IMR-90 (cell line): ENCODE measurements at regions of chr6 and their contacts with region 1.

Region 1: DNA sequence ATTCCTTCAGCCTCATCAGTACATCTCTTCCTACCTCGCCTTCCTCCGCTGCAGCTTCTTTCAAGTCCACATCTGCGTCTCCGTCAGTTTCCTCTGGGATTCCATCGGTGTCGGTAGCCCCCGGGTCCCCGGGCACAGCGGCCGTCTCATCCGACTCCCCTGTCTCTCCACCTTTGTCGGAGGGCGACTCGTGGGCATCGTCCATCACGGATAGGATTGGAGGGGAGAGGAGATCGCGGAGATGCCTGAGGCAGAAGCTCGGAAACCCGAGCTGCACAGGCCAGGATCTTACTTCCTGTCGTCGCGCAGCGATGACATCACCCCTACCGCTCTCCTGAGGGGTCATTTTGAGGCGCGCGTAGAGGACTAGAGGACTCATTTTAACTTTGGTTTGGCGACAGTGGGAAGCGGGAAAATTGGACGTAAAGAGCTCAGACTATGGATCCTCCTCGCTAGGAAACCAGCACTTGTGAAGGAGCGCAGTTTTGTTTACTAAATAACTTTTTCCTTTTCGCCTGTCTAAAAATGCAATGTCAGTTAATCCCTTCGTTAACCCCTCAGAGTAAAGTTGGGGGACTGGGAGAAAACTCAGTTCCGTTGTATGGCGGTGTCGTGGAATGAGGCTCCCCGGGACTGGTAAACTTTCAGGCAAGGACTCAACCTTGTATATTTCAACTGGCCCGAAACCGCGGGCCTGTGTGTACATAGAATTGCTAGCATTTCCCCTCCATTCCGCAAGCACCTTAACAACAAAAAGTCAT is at the start of gene TAF11:
- DNase-seq: peak; percentile 96
- ATAC-seq: peak; percentile 92
- H3K4me3 ChIP-seq: peak within 1 kb of the TSS; percentile 80
- H3K27ac ChIP-seq: peak within 1 kb of the TSS; percentile 85
- H3K4me1 ChIP-seq: no peaks in the 10 kb centered on the region
- H3K27me3 ChIP-seq: no peaks in the 10 kb centered on the region
- CTCF ChIP-seq: no peak
- POLR2A ChIP-seq: peak; percentile 88
- RAD21 ChIP-seq: peak; percentile 4; the same call in 1 of the 2 replicates
- total RNA-seq, gene TAF11: 12.7 and 24.2 TPM in 2 replicates

Region 2: GRCh38 chr6:34810936-34811632 is 76.8 kb before region 1 on chr6:
- CTCF ChIA-PET with region 1: no interaction called
- POLR2A ChIA-PET with region 1: no interaction called
- dilution Hi-C with region 1: no loop called
- in situ Hi-C with region 1: no loop called
- intact Hi-C with region 1: no loop called
- DNase-seq: peak; percentile 38
- ATAC-seq: peak; percentile 71
- H3K4me3 ChIP-seq: no peak overlapping the region
- H3K27ac ChIP-seq: no peak overlapping the region
- H3K4me1 ChIP-seq: peaks cover 5% of the 10 kb centered on the region
- H3K27me3 ChIP-seq: no peaks in the 10 kb centered on the region; the same call in 1 of the 2 replicates
- CTCF ChIP-seq: no peak
- POLR2A ChIP-seq: no peak
- RAD21 ChIP-seq: no peak

Region 3: DNA sequence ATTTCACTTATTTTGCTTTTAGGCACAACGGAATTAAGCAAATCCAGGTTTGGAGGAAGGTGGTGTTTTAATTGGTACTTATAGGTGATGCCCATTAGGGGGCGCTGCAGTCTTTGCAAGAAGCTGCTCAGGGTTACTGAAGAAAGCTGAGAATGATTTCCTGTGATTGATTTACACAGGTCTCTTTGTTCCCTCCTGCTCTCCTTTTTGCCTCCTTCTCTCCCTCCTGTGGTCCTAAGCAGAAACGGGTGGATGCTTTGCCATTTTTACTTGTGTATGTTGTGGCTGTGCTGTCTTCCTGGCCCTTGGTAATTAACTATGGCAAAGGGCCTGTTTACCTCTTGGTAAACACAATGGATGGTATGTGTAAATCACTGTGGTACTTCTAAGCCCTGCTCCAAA is 98.9 kb after region 1 on chr6:
- CTCF ChIA-PET with region 1: interaction called, 3 read pairs
- POLR2A ChIA-PET with region 1: no interaction called
- dilution Hi-C with region 1: no loop called
- in situ Hi-C with region 1: no loop called
- intact Hi-C with region 1: loop called (anchors 2 kb)
- DNase-seq: peak; percentile 84
- ATAC-seq: peak; percentile 66
- H3K4me3 ChIP-seq: no peak overlapping the region
- H3K27ac ChIP-seq: no peak overlapping the region
- H3K4me1 ChIP-seq: peaks cover 5% of the 10 kb centered on the region
- H3K27me3 ChIP-seq: no peaks in the 10 kb centered on the region
- CTCF ChIP-seq: peak; percentile 86
- POLR2A ChIP-seq: no peak
- RAD21 ChIP-seq: peak; percentile 94

Region 4: DNA sequence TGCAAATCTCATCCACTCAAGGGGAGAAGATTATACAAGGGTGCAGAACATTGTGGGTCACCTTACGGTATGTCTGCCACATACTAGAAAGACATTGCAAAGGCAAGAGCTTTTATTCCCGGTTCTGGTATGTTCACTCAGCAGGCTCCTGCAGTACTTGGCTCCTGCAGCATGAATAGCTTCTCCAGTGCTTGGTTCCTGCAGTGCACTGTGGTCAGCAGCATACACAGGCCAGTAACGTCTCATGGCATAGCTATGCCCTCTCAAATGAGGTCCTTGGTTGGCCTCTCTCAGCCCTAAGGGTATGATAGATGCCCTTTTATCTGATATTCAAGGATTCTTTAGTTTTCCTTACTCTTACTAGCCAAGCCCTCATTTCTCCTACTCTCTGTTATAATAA is 240.6 kb after region 1 on chr6:
- CTCF ChIA-PET with region 1: interaction called, 3 read pairs
- POLR2A ChIA-PET with region 1: no interaction called
- dilution Hi-C with region 1: no loop called
- in situ Hi-C with region 1: no loop called
- intact Hi-C with region 1: loop called (anchors 5 kb)
- DNase-seq: peak; percentile 59
- ATAC-seq: peak; percentile 88
- H3K4me3 ChIP-seq: no peak overlapping the region
- H3K27ac ChIP-seq: no peak overlapping the region
- H3K4me1 ChIP-seq: no peaks in the 10 kb centered on the region
- H3K27me3 ChIP-seq: peaks cover 17% of the 10 kb centered on the region
- CTCF ChIP-seq: no peak
- POLR2A ChIP-seq: no peak
- RAD21 ChIP-seq: no peak

Region 5: DNA sequence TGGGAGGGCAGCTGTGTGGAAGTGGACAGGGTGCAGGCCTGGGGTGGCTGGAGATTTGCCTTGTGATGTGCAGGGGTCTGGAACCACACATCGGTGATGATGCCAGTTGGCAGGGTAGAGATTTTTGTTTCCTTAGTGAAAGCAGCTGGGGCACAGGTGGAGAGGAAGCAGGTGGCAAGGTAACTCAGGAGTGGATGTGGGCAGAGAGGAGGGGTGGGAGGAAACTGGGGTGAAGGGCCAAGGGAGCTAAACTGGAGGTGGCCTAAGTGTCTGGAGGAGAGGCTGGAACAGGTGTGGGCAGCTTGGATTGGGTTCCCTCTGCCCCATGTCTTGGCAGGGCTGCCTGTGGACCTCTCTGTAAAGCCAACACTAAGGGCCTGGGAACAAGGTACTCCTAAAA is 321.1 kb after region 1 on chr6:
- CTCF ChIA-PET with region 1: no interaction called
- POLR2A ChIA-PET with region 1: no interaction called
- dilution Hi-C with region 1: no loop called
- in situ Hi-C with region 1: no loop called
- intact Hi-C with region 1: loop called (anchors 5 kb)
- DNase-seq: no peak
- ATAC-seq: no peak
- H3K4me3 ChIP-seq: no peak overlapping the region
- H3K27ac ChIP-seq: no peak overlapping the region
- H3K4me1 ChIP-seq: peaks cover 5% of the 10 kb centered on the region
- H3K27me3 ChIP-seq: peaks cover 45% of the 10 kb centered on the region
- CTCF ChIP-seq: no peak
- POLR2A ChIP-seq: no peak
- RAD21 ChIP-seq: no peak